ENCODE measurements at regions of chr17 and their contacts with region 1.

Region 1: DNA sequence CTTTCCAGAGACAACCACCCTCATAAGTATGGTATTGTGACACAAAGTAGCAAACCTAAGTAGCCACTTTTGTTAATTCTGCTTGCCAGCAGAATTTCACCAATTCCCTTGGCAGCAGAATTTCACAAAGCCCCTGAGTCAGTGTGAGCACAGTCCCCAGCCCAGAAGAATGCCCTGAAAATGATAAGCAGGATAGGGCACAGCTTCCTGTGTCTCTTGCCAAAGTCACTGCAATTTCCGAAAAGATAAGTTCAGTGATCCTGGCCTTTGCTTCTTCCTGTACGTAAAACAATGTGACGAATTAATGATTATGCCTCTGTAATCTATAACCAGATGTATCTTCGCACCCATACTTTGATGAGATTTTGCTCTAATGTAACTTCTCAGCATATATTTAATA is 16.0 kb upstream of the WIPF2 start:
- DNase-seq: no peak
- H3K4me3 ChIP-seq: no peak overlapping the region
- H3K27ac ChIP-seq: no peak overlapping the region
- H3K4me1 ChIP-seq: no peaks in the 10 kb centered on the region
- H3K27me3 ChIP-seq: no peaks in the 10 kb centered on the region
- CTCF ChIP-seq: no peak

Region 2: GRCh38 chr17:39209317-39210092 is 993.6 kb before region 1 on chr17:
- CTCF ChIA-PET with region 1: interaction called, 10 read pairs
- POLR2A ChIA-PET with region 1: no interaction called
- intact Hi-C with region 1: no loop called
- DNase-seq: no peak
- H3K4me3 ChIP-seq: no peak overlapping the region
- H3K27ac ChIP-seq: no peak overlapping the region
- H3K4me1 ChIP-seq: no peaks in the 10 kb centered on the region
- H3K27me3 ChIP-seq: no peaks in the 10 kb centered on the region
- CTCF ChIP-seq: no peak

Region 3: GRCh38 chr17:39352511-39352910 is 850.6 kb before region 1 on chr17:
- CTCF ChIA-PET with region 1: interaction called, 20 read pairs
- POLR2A ChIA-PET with region 1: no interaction called
- intact Hi-C with region 1: no loop called
- DNase-seq: no peak
- H3K4me3 ChIP-seq: no peak overlapping the region
- H3K27ac ChIP-seq: no peak overlapping the region
- H3K4me1 ChIP-seq: 0 out of 2 replicates have a peak, but pooled peaks cover 8% of the 10 kb centered on the region
- H3K27me3 ChIP-seq: no peaks in the 10 kb centered on the region
- CTCF ChIP-seq: peak; percentile 16; the same call in 1 of the 2 replicates

Region 4: DNA sequence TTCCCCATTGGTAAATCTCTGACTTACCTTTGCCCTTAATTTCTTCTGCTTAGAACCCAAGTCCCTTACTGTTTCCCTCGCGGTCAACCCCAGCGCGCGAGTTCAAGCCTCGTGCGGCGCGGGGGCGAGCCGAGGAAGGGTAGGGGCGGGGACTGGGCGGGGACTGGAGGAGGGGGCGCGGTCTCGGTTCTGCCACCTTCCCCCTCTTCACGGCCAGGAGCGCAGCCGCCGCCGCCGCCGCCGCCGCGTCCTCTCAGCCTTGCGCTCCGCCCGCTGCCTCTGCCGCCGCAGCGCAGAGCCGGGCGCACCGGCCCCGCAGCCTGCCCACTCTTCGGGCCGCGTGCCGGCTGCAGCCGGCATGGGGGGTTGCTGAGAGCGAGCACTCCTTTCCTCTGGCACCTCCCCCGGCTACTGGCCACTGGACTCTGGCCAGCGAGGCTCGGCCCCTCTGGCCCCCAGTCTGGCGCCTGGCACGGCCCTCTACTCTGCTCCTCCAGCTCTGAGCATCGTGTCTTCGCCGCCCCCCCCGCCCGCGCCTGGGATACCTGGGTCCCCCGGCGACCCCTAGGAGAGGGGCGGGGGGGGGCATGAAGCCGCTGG is 25.8 kb before region 1 on chr17 and contains the start of gene RAPGEFL1:
- CTCF ChIA-PET with region 1: interaction called, 10 read pairs
- POLR2A ChIA-PET with region 1: no interaction called
- intact Hi-C with region 1: no loop called
- DNase-seq: peak; percentile 41 to 64
- H3K4me3 ChIP-seq: peak within 1 kb of the TSS; percentile 81; the same call in 1 of the 2 replicates
- H3K27ac ChIP-seq: no peak within 1 kb of the TSS
- H3K4me1 ChIP-seq: peaks cover 62% of the 10 kb centered on the region
- H3K27me3 ChIP-seq: no peaks in the 10 kb centered on the region
- CTCF ChIP-seq: no peak
- total RNA-seq, gene RAPGEFL1: 14.0 and 14.9 TPM in 2 replicates

Region 5: DNA sequence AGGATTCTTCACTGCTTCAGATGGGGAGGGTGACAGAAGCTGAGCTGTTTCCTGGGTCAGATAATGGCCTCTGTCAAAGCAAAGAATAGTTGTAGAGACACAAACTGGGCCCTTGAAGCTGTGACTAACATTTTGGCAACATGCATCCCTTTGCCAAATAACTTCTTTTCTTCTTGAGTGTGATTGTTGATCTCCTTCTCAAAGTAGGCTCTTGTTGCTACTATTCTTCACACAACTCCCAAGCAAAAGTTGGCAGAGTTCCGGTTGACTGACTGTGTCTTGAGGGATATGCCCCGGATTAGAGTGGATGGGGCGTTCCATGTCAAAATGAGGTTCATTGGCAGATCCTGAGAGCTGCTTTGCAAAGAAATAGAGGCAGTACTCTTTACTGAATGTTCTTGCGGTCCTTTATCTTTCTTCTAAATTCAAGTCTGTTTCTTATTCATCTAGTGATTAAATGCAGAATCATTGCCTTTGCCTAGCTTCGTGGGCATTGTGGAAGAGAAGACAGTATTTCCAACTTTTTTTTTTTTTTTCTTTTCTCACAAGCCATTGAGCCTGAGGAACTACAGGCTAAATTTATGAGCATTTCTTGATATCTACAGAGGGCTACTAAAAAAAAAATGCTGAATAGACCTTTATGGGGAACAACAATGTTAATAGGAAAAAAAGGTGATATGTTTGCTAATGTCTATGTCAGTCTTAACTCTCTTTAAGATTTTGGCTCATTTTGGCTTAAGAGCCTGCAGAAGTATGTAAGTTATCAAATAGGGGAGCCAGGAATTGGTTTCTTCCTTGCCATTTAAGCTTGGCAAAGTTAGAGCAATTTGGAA is 21.8 kb after region 1 on chr17:
- CTCF ChIA-PET with region 1: no interaction called
- POLR2A ChIA-PET with region 1: no interaction called
- intact Hi-C with region 1: no loop called
- DNase-seq: no peak
- H3K4me3 ChIP-seq: no peak overlapping the region
- H3K27ac ChIP-seq: no peak overlapping the region
- H3K4me1 ChIP-seq: peaks cover 11% of the 10 kb centered on the region; the same call in 1 of the 2 replicates
- H3K27me3 ChIP-seq: no peaks in the 10 kb centered on the region
- CTCF ChIP-seq: no peak

Measured in PC-9 (cell line).